ENCODE measurements at regions of chr13 and their contacts with region 1.

Region 1: DNA sequence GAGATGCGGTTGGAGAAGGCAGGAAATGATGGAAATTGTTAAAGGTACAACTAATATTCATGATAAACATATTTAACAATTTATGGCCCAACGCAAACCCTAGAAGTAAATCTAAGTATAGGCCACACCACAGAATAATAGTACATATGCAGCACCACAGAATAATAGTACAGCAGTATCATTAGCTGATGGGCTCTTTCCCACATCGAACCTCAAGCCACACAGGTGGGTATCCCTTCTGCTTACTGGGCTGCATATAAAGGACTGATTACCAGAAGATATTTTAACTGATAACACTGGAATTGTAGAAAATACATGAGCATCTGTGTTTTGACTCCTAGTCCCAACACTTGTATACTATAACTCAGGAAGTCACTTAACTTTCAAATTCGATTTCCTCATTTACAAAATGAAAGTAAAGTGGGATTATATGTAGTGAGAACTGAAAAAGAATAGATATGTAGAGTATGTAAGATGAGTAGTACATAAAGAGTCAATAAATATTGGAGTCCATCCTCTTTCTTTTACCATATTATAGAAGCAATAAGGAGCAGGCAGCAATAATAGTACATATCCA is 91.5 kb downstream of the TSC22D1 start:
- DNase-seq: no peak
- ATAC-seq: no peak
- H3K4me3 ChIP-seq: no peak overlapping the region
- H3K27ac ChIP-seq: no peak overlapping the region
- H3K4me1 ChIP-seq: no peaks in the 10 kb centered on the region
- H3K27me3 ChIP-seq: no peaks in the 10 kb centered on the region
- CTCF ChIP-seq: no peak
- EP300 ChIP-seq: no peak
- POLR2A ChIP-seq: no peak
- RAD21 ChIP-seq: no peak

Region 2: DNA sequence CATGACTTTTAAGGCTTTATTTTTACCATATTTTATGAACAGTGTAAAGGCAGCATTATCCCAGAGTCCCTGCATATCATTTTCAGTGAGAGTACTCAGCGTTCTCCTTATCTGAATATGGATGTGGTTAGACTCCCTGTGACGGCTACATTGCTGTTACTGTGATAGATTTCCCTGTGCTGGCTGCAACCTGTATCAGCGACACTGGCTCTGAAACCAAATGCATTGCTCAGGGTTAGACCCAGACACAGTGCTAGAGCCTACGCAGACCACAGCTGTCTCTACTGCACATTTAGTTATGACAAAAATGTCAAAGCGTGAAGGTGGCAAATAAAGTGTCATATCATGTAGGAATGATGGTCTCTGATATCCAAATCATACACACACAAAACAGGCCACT is 835.9 kb before region 1 on chr13:
- CTCF ChIA-PET with region 1: no interaction called
- POLR2A ChIA-PET with region 1: no interaction called
- in situ Hi-C with region 1: no loop called
- intact Hi-C with region 1: no loop called
- DNase-seq: no peak
- ATAC-seq: no peak
- H3K4me3 ChIP-seq: no peak overlapping the region
- H3K27ac ChIP-seq: no peak overlapping the region
- H3K4me1 ChIP-seq: no peaks in the 10 kb centered on the region
- H3K27me3 ChIP-seq: no peaks in the 10 kb centered on the region
- CTCF ChIP-seq: no peak
- EP300 ChIP-seq: no peak
- POLR2A ChIP-seq: no peak
- RAD21 ChIP-seq: no peak

Region 3: GRCh38 chr13:44648392-44649103 is 163.9 kb after region 1 on chr13:
- CTCF ChIA-PET with region 1: interaction called, 4 read pairs
- POLR2A ChIA-PET with region 1: no interaction called
- in situ Hi-C with region 1: no loop called
- intact Hi-C with region 1: loop called (anchors 10 kb)
- DNase-seq: peak in 1 of 4 experiments; percentile 7
- ATAC-seq: no peak
- H3K4me3 ChIP-seq: no peak overlapping the region
- H3K27ac ChIP-seq: no peak overlapping the region
- H3K4me1 ChIP-seq: no peaks in the 10 kb centered on the region
- H3K27me3 ChIP-seq: no peaks in the 10 kb centered on the region; a peak in 1 of 5 replicates
- CTCF ChIP-seq: peak in 2 of 3 experiments; percentile 19 to 40; a peak in 2 of 6 replicates
- EP300 ChIP-seq: no peak
- POLR2A ChIP-seq: no peak
- RAD21 ChIP-seq: peak in 1 of 2 experiments; percentile 37; a peak in 2 of 4 replicates

Region 4: GRCh38 chr13:44810061-44810840 is 325.6 kb after region 1 on chr13:
- CTCF ChIA-PET with region 1: no interaction called
- POLR2A ChIA-PET with region 1: no interaction called
- in situ Hi-C with region 1: no loop called
- intact Hi-C with region 1: loop called (anchors 5 kb)
- DNase-seq: no peak
- ATAC-seq: no peak
- H3K4me3 ChIP-seq: no peak overlapping the region
- H3K27ac ChIP-seq: no peak overlapping the region
- H3K4me1 ChIP-seq: no peaks in the 10 kb centered on the region
- H3K27me3 ChIP-seq: peaks cover 0 to 3% of the 10 kb centered on the region in 2 experiments; a peak in 1 of 5 replicates
- CTCF ChIP-seq: no peak
- EP300 ChIP-seq: no peak
- POLR2A ChIP-seq: no peak
- RAD21 ChIP-seq: no peak

Region 5: DNA sequence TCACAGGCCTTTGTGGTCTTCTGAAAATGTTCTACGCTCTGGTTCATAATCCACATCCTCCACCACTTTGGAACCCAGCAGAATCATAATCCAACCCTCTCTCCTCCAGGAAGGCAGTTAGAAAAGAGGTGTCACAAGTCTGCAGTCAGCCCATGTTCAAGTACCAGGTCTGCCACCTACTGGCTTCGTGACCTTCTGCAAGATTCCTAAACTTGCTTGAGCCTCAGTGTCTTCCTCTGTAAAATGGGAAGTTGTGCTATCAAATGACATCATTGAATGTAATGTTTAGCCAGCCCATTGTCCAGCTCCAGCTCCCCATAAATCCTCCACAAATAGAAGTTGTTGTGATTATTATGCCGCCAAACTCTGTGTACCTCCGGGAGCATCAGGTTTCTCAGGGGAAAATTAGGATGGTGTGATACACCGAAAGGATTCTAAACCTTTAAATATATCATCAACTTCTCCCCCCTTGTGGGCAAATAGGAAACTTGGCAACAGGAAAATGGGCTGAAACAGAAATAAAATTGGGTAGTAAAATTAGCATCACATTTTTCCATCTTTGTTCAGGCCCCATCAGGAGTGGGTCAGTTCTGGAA is 394.9 kb after region 1 on chr13:
- CTCF ChIA-PET with region 1: interaction called, 5 read pairs
- POLR2A ChIA-PET with region 1: no interaction called
- in situ Hi-C with region 1: no loop called
- intact Hi-C with region 1: loop called (anchors 5 kb)
- DNase-seq: peak in 1 of 4 experiments; percentile 16
- ATAC-seq: no peak
- H3K4me3 ChIP-seq: no peak overlapping the region
- H3K27ac ChIP-seq: no peak overlapping the region
- H3K4me1 ChIP-seq: no peaks in the 10 kb centered on the region
- H3K27me3 ChIP-seq: peaks cover 0 to 13% of the 10 kb centered on the region in 2 experiments; a peak in 2 of 5 replicates
- CTCF ChIP-seq: peak in 1 of 3 experiments; percentile 36; a peak in 2 of 6 replicates
- EP300 ChIP-seq: no peak
- POLR2A ChIP-seq: no peak
- RAD21 ChIP-seq: peak in 1 of 2 experiments; percentile 39; a peak in 2 of 4 replicates

Region 6: GRCh38 chr13:44969551-44970484 is 485.2 kb after region 1 on chr13:
- CTCF ChIA-PET with region 1: interaction called, 18 read pairs
- POLR2A ChIA-PET with region 1: no interaction called
- in situ Hi-C with region 1: loop called (anchors 10 kb)
- intact Hi-C with region 1: loop called (anchors 1 kb)
- DNase-seq: peak in 2 of 4 experiments; percentile 14 to 28
- ATAC-seq: peak; percentile 64; the same call in 1 of the 3 replicates
- H3K4me3 ChIP-seq: no peak overlapping the region
- H3K27ac ChIP-seq: no peak overlapping the region
- H3K4me1 ChIP-seq: peaks cover 0 to 3% of the 10 kb centered on the region in 2 experiments; a peak in 1 of 5 replicates
- H3K27me3 ChIP-seq: no peaks in the 10 kb centered on the region
- CTCF ChIP-seq: peak; percentile 28 to 68 (median 48); a peak in 4 of 6 replicates
- EP300 ChIP-seq: no peak
- POLR2A ChIP-seq: no peak
- RAD21 ChIP-seq: peak; percentile 62 to 72

Region 7: DNA sequence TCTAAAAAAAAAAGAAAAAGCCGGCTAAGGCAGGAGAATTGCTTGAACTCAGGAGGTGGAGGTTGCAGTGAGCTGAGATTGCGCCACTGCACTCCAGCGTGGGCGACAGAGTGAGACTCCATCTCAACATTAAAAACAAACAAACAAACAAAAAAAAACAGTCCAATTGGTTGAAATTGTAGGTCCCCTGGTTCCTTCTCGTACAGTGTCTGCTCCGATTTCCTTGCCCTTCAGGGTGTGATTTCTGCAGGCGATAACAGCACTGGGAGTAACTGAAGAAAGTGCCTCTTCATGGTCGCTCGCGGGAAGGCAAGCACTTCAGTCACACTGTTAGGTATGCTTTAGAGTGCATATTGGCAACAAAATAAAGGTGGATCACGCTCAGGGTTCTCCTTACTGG is 816.6 kb after region 1 on chr13:
- CTCF ChIA-PET with region 1: no interaction called
- POLR2A ChIA-PET with region 1: no interaction called
- in situ Hi-C with region 1: no loop called
- intact Hi-C with region 1: loop called (anchors 10 kb)
- DNase-seq: peak in 2 of 4 experiments; percentile 38 to 50
- ATAC-seq: peak; percentile 81
- H3K4me3 ChIP-seq: no peak overlapping the region
- H3K27ac ChIP-seq: no peak overlapping the region; the same call in 2 of the 3 replicates
- H3K4me1 ChIP-seq: peaks cover 16 to 21% of the 10 kb centered on the region in 2 experiments; a peak in 4 of 5 replicates
- H3K27me3 ChIP-seq: no peaks in the 10 kb centered on the region
- CTCF ChIP-seq: no peak
- EP300 ChIP-seq: no peak
- POLR2A ChIP-seq: no peak
- RAD21 ChIP-seq: no peak